ENCODE measurements at regions of chr1 and their contacts with region 1.

Region 1: GRCh38 chr1:27383039-27383605 is at the start of gene CD164L2:
- DNase-seq: peak in 5 of 9 donors; percentile 42 to 68 (median 53)
- ATAC-seq: peak; percentile 84
- H3K4me3 ChIP-seq: no peak within 1 kb of the TSS
- H3K4me3 Mint-ChIP-seq: peak within 1 kb of the TSS in 1 of 10 donors; percentile 23
- H3K27ac ChIP-seq: no peak within 1 kb of the TSS
- H3K27ac Mint-ChIP-seq: no peak within 1 kb of the TSS
- H3K4me1 ChIP-seq: no peaks in the 10 kb centered on the region
- H3K4me1 Mint-ChIP-seq: peaks cover 0 to 5% (median 0%) of the 10 kb centered on the region in 7 donors
- H3K27me3 ChIP-seq: no peaks in the 10 kb centered on the region
- H3K27me3 Mint-ChIP-seq: peaks cover 0 to 19% (median 0%) of the 10 kb centered on the region in 5 donors
- total RNA-seq, gene CD164L2: 0.24 TPM in 1 of 5 experiments, not detected in the others

Region 2: DNA sequence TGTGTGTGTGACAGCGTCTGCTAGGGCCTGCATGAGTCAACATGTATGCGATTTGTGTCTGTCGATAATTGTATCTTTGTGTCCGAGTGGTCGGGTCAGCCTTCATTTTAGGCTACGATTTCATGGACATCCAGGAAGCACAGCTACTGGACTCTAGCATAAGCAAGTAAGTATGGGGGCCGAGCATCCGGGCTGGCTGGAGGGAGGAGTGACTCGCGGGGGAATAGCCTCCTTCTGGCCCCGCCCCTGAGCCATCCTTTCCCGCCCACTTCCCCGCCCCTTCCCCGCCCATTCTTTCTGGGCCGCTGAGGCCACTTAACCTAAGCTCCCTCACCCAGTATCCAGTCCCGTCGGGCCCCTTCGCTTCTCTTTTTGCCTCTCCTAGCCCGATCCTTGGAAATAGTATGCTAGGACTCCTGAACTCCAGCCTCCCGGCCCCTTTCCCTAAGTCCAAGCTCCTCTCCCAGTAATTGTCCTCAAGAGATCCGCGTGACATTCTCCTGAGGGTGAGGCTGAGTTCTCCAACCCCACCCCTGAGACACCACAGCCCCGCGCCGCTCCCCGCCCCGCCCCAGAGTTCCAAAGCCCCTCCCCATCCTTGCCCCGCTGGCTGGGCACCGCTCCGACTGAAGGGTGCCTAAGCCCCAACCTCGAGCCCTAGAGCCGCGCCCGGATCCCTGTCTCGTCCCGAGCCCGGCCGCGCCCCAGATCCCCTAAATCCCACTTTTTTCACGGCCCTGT is 17.6 kb before region 1 on chr1:
- CTCF ChIA-PET with region 1: interaction called, 18 read pairs
- POLR2A ChIA-PET with region 1: interaction called, 3 read pairs
- intact Hi-C with region 1: loop called (anchors 1 kb)
- DNase-seq: peak; percentile 48 to 77 (median 67)
- ATAC-seq: peak; percentile 78
- H3K4me3 ChIP-seq: peak overlapping the region; percentile 61
- H3K4me3 Mint-ChIP-seq: peak overlapping the region; percentile 74 to 93 (median 88)
- H3K27ac ChIP-seq: peak overlapping the region; percentile 60
- H3K27ac Mint-ChIP-seq: peak overlapping the region; percentile 54 to 90 (median 73)
- H3K4me1 ChIP-seq: peaks cover 13 to 17% of the 10 kb centered on the region in 2 donors
- H3K4me1 Mint-ChIP-seq: peaks cover 21 to 55% (median 42%) of the 10 kb centered on the region in 7 donors
- H3K27me3 ChIP-seq: no peaks in the 10 kb centered on the region
- H3K27me3 Mint-ChIP-seq: no peaks in the 10 kb centered on the region

Region 3: DNA sequence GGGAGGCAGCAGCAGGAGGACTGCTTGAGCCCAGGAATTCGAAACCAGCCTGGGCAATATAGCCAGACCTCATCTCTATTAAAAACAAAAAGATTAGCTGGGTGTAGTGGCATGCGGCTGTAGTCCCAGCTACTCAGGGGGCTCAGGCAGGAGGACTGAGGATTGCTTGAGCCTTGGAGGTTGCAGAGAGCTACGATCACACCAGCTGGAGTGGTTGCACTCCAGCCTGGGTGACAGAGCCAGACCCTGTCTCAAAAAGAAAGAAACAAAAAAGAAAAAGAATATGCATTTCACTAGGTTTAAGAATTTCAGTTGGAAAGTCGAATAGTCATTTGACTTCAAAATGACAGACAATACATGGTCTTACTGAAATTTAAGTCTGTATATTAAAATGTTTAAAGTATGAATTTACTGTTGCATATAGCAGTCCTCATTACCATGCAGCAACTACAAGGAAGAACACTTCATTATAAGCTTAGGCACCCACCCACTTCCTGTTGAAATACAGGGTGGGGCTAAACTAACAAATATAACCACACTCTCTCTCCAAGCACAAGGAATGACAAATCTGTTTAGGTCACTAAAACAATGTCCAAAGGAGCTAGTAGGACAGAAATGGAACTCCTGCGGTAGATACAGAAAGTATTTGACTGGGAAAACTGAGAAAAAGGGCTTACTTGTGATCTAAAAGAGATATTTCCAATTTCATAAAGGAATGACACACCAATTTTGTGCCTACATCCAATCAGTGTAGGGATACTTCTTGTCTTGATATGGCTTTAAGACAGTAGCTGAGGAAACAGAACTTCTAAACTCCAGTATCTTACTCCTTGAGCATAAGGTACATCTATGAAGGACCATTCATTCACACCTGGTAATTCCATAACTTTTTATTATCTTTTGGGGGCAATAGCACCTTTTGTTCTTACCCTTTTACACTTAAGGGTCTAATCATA is 53.4 kb after region 1 on chr1:
- CTCF ChIA-PET with region 1: no interaction called
- POLR2A ChIA-PET with region 1: no interaction called
- intact Hi-C with region 1: no loop called
- DNase-seq: peak in 7 of 9 donors; percentile 37 to 55 (median 48)
- ATAC-seq: peak; percentile 88
- H3K4me3 ChIP-seq: peak overlapping the region; percentile 5
- H3K4me3 Mint-ChIP-seq: peak overlapping the region; percentile 70 to 89 (median 79)
- H3K27ac ChIP-seq: peak overlapping the region; percentile 68
- H3K27ac Mint-ChIP-seq: peak overlapping the region; percentile 77 to 96 (median 91)
- H3K4me1 ChIP-seq: peaks cover 53 to 75% of the 10 kb centered on the region in 2 donors
- H3K4me1 Mint-ChIP-seq: peaks cover 53 to 87% (median 73%) of the 10 kb centered on the region in 7 donors
- H3K27me3 ChIP-seq: no peaks in the 10 kb centered on the region
- H3K27me3 Mint-ChIP-seq: no peaks in the 10 kb centered on the region